ENCODE measurements at regions of chr1 and their contacts with region 1.

Region 1: GRCh38 chr1:224623743-224624333 is 7.7 kb downstream of the CNIH3 start:
- DNase-seq: no peak

Region 2: GRCh38 chr1:224513787-224514209 is 110.0 kb before region 1 on chr1:
- in situ Hi-C with region 1: loop called (anchors 25 kb)
- DNase-seq: peak; percentile 82

Region 3: DNA sequence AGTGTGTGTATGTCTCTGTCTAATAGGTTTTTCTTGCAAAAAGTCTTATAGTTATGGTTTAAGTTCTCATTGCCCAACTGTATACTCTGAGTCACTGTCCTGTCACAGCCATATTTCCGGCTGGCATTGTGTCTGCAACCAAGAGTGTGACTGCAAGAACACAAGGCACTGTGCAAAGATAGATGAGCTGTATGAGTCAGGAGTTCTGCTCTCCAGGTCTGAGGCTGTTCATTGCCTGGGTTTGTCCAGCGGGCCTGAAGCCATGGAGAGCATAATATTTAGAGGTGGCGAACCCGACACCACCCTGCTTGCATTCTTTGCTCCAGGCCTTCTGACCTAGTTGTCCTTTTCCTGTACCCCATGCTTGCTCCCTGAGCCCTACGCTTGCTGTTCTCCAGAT is 58.7 kb before region 1 on chr1:
- in situ Hi-C with region 1: no loop called
- DNase-seq: peak; percentile 0

Region 4: GRCh38 chr1:224579526-224579925 is 44.3 kb before region 1 on chr1:
- in situ Hi-C with region 1: no loop called
- DNase-seq: no peak

Region 5: GRCh38 chr1:224684979-224685425 is 61.2 kb after region 1 on chr1:
- in situ Hi-C with region 1: no loop called
- DNase-seq: no peak